ENCODE measurements at regions of chr9 and their contacts with region 1.

Region 1: GRCh38 chr9:100028201-100028784 is 70.5 kb downstream of the ERP44 start:
- DNase-seq: peak; percentile 71 to 86 (median 72)
- ATAC-seq: peak; percentile 99
- H3K4me3 ChIP-seq: no peak overlapping the region
- H3K27ac ChIP-seq: no peak overlapping the region
- H3K4me1 ChIP-seq: no peaks in the 10 kb centered on the region
- H3K27me3 ChIP-seq: no peaks in the 10 kb centered on the region
- CTCF ChIP-seq: peak; percentile 89 to 95 (median 95)
- EP300 ChIP-seq: no peak
- POLR2A ChIP-seq: no peak
- RAD21 ChIP-seq: peak; percentile 93 to 96

Region 2: GRCh38 chr9:99998266-99998665 is 30.0 kb before region 1 on chr9:
- CTCF ChIA-PET with region 1: no interaction called
- POLR2A ChIA-PET with region 1: no interaction called
- in situ Hi-C with region 1: no loop called
- intact Hi-C with region 1: no loop called
- DNase-seq: no peak
- ATAC-seq: no peak
- H3K4me3 ChIP-seq: no peak overlapping the region
- H3K27ac ChIP-seq: no peak overlapping the region
- H3K4me1 ChIP-seq: no peaks in the 10 kb centered on the region
- H3K27me3 ChIP-seq: no peaks in the 10 kb centered on the region
- CTCF ChIP-seq: no peak
- EP300 ChIP-seq: no peak
- POLR2A ChIP-seq: no peak
- RAD21 ChIP-seq: no peak

Region 3: DNA sequence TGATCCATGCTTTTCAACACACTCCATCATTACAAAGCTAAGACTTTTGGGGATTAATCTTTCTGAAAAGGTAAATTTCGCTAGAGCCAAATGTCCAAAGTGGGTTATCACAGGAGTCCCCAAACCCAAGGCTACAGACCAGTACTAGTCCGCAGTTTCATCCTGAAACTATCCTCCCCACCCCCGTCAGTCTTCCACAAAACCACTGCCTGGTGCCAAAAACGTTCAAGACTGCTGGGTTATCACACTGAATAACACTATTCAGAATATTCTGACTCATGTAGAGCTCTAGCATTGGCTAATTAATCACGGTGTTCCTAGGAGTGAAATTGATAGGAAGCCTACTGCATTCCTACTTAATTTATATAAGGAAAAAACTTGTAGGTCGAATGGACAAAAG is 45.8 kb after region 1 on chr9:
- CTCF ChIA-PET with region 1: no interaction called
- POLR2A ChIA-PET with region 1: no interaction called
- in situ Hi-C with region 1: no loop called
- intact Hi-C with region 1: loop called (anchors 5 kb)
- DNase-seq: peak in 2 of 4 experiments; percentile 26 to 49
- ATAC-seq: peak; percentile 57
- H3K4me3 ChIP-seq: no peak overlapping the region
- H3K27ac ChIP-seq: no peak overlapping the region
- H3K4me1 ChIP-seq: peaks cover 20 to 52% of the 10 kb centered on the region in 2 experiments; a peak in 4 of 5 replicates
- H3K27me3 ChIP-seq: no peaks in the 10 kb centered on the region
- CTCF ChIP-seq: no peak
- EP300 ChIP-seq: no peak
- POLR2A ChIP-seq: no peak
- RAD21 ChIP-seq: no peak

Region 4: GRCh38 chr9:100098887-100099721 is 70.8 kb after region 1 on chr9 and contains the starts of genes ERP44 and INVS:
- CTCF ChIA-PET with region 1: no interaction called
- POLR2A ChIA-PET with region 1: no interaction called
- in situ Hi-C with region 1: no loop called
- intact Hi-C with region 1: loop called (anchors 5 kb)
- DNase-seq: peak; percentile 85 to 99 (median 90)
- ATAC-seq: peak; percentile 96
- H3K4me3 ChIP-seq: peak within 1 kb of the TSS; percentile 83
- H3K27ac ChIP-seq: peak within 1 kb of the TSS; percentile 84
- H3K4me1 ChIP-seq: peaks cover 4 to 17% of the 10 kb centered on the region in 2 experiments; a peak in 2 of 5 replicates
- H3K27me3 ChIP-seq: no peaks in the 10 kb centered on the region
- CTCF ChIP-seq: no peak; a peak in 1 of 6 replicates
- EP300 ChIP-seq: no peak
- POLR2A ChIP-seq: peak; percentile 87
- RAD21 ChIP-seq: no peak
- polyA plus RNA-seq, gene ERP44: 10.8 to 11.2 TPM
- polyA plus RNA-seq, gene INVS: 0.77 to 0.91 TPM

Region 5: GRCh38 chr9:100216178-100216787 is 188.0 kb after region 1 on chr9:
- CTCF ChIA-PET with region 1: interaction called, 10 read pairs
- POLR2A ChIA-PET with region 1: interaction called, 3 read pairs
- in situ Hi-C with region 1: loop called (anchors 5 kb)
- intact Hi-C with region 1: loop called (anchors 1 kb)
- DNase-seq: peak; percentile 66 to 84 (median 74)
- ATAC-seq: peak; percentile 99
- H3K4me3 ChIP-seq: no peak overlapping the region
- H3K27ac ChIP-seq: no peak overlapping the region
- H3K4me1 ChIP-seq: peaks cover 0 to 12% of the 10 kb centered on the region in 2 experiments; a peak in 2 of 5 replicates
- H3K27me3 ChIP-seq: no peaks in the 10 kb centered on the region
- CTCF ChIP-seq: peak; percentile 84 to 88 (median 87)
- EP300 ChIP-seq: no peak
- POLR2A ChIP-seq: no peak
- RAD21 ChIP-seq: peak; percentile 83 to 92

Region 6: GRCh38 chr9:100317706-100318105 is 289.4 kb after region 1 on chr9:
- CTCF ChIA-PET with region 1: interaction called, 4 read pairs
- POLR2A ChIA-PET with region 1: no interaction called
- in situ Hi-C with region 1: loop called (anchors 10 kb)
- intact Hi-C with region 1: loop called (anchors 2 kb)
- DNase-seq: no peak
- ATAC-seq: no peak
- H3K4me3 ChIP-seq: no peak overlapping the region
- H3K27ac ChIP-seq: no peak overlapping the region
- H3K4me1 ChIP-seq: no peaks in the 10 kb centered on the region
- H3K27me3 ChIP-seq: no peaks in the 10 kb centered on the region
- CTCF ChIP-seq: no peak
- EP300 ChIP-seq: no peak
- POLR2A ChIP-seq: no peak
- RAD21 ChIP-seq: no peak

Region 7: GRCh38 chr9:100322954-100323536 is 294.8 kb after region 1 on chr9:
- CTCF ChIA-PET with region 1: interaction called, 4 read pairs
- POLR2A ChIA-PET with region 1: no interaction called
- in situ Hi-C with region 1: loop called (anchors 10 kb)
- intact Hi-C with region 1: loop called (anchors 2 kb)
- DNase-seq: peak; percentile 19 to 57 (median 25)
- ATAC-seq: peak; percentile 72
- H3K4me3 ChIP-seq: no peak overlapping the region
- H3K27ac ChIP-seq: no peak overlapping the region
- H3K4me1 ChIP-seq: no peaks in the 10 kb centered on the region
- H3K27me3 ChIP-seq: no peaks in the 10 kb centered on the region
- CTCF ChIP-seq: peak; percentile 47 to 76 (median 67); a peak in 5 of 6 replicates
- EP300 ChIP-seq: no peak
- POLR2A ChIP-seq: no peak
- RAD21 ChIP-seq: peak; percentile 25 to 61